Breast epithelium (tissue), 4 donors: ENCODE measurements at regions of chr4 and their contacts with region 1.

Region 1: DNA sequence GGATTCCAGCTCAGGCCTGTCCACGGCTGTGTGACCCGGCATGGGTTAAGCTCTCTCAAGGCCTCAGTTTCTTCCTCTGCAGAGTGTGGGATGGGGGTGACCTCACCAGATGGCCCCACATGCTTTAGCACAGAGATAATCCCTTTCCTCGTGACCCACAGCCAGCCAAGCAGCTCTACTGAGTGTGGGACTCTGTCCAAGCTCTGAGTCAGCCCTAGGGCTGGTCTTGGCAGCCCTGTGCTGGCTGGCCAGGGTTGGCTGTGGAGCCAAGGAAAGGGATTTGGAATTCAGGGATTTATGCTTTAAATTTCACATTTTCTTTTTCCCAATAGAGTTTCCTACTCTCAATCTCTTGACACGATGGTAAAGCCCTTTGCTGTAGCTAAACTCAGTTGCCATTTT is 19.7 kb upstream of the SPON2 start:
- DNase-seq: peak; percentile 83
- H3K4me3 ChIP-seq: peak overlapping the region in 1 of 3 donors; percentile 1
- H3K27ac ChIP-seq: peak overlapping the region; percentile 92 to 95
- H3K4me1 ChIP-seq: peaks cover 12 to 17% of the 10 kb centered on the region in 2 donors
- H3K27me3 ChIP-seq: no peaks in the 10 kb centered on the region
- CTCF ChIP-seq: no peak
- POLR2A ChIP-seq: no peak

Region 2: GRCh38 chr4:1072830-1073446 is 119.2 kb before region 1 on chr4:
- intact Hi-C with region 1: no loop called
- DNase-seq: peak in 1 of 2 donors; percentile 51
- H3K4me3 ChIP-seq: no peak overlapping the region
- H3K27ac ChIP-seq: no peak overlapping the region
- H3K4me1 ChIP-seq: no peaks in the 10 kb centered on the region
- H3K27me3 ChIP-seq: no peaks in the 10 kb centered on the region
- CTCF ChIP-seq: peak; percentile 41 to 60 (median 59)
- POLR2A ChIP-seq: no peak

Region 3: GRCh38 chr4:1130316-1131186 is 61.5 kb before region 1 on chr4:
- intact Hi-C with region 1: loop called (anchors 2 kb)
- DNase-seq: peak in 1 of 2 donors; percentile 44
- H3K4me3 ChIP-seq: no peak overlapping the region
- H3K27ac ChIP-seq: no peak overlapping the region
- H3K4me1 ChIP-seq: peaks cover 0 to 6% of the 10 kb centered on the region in 2 donors
- H3K27me3 ChIP-seq: no peaks in the 10 kb centered on the region
- CTCF ChIP-seq: peak; percentile 96 to 98 (median 97)
- POLR2A ChIP-seq: no peak